Esophagus muscularis mucosa (tissue), 4 donors: ENCODE measurements at regions of chr20 and their contacts with region 1.

Region 1: GRCh38 chr20:21125849-21126580 is at the start of gene KIZ:
- DNase-seq: peak; percentile 97
- H3K4me3 ChIP-seq: peak within 1 kb of the TSS; percentile 82 to 97 (median 92)
- H3K27ac ChIP-seq: peak within 1 kb of the TSS; percentile 82 to 87 (median 86)
- H3K4me1 ChIP-seq: peaks cover 0 to 21% (median 17%) of the 10 kb centered on the region in 4 donors
- H3K27me3 ChIP-seq: no peaks in the 10 kb centered on the region
- CTCF ChIP-seq: peak; percentile 43 to 64 (median 51)
- EP300 ChIP-seq: no peak
- POLR2A ChIP-seq: peak; percentile 87
- total RNA-seq, gene KIZ: 17.2 to 32.0 (median 25.6) TPM

Region 2: GRCh38 chr20:21074605-21075336 is 51.2 kb before region 1 on chr20:
- intact Hi-C with region 1: no loop called
- DNase-seq: no peak
- H3K4me3 ChIP-seq: no peak overlapping the region
- H3K27ac ChIP-seq: no peak overlapping the region
- H3K4me1 ChIP-seq: no peaks in the 10 kb centered on the region
- H3K27me3 ChIP-seq: peaks cover 0 to 14% (median 0%) of the 10 kb centered on the region in 4 donors
- CTCF ChIP-seq: no peak
- EP300 ChIP-seq: no peak
- POLR2A ChIP-seq: no peak

Region 3: GRCh38 chr20:21099751-21100577 is 26.1 kb before region 1 on chr20:
- intact Hi-C with region 1: no loop called
- DNase-seq: peak; percentile 83
- H3K4me3 ChIP-seq: peak overlapping the region; percentile 44 to 61 (median 46)
- H3K27ac ChIP-seq: no peak overlapping the region
- H3K4me1 ChIP-seq: peaks cover 33 to 46% (median 43%) of the 10 kb centered on the region in 4 donors
- H3K27me3 ChIP-seq: peaks cover 0 to 90% (median 66%) of the 10 kb centered on the region in 4 donors
- CTCF ChIP-seq: no peak
- EP300 ChIP-seq: no peak
- POLR2A ChIP-seq: no peak

Region 4: DNA sequence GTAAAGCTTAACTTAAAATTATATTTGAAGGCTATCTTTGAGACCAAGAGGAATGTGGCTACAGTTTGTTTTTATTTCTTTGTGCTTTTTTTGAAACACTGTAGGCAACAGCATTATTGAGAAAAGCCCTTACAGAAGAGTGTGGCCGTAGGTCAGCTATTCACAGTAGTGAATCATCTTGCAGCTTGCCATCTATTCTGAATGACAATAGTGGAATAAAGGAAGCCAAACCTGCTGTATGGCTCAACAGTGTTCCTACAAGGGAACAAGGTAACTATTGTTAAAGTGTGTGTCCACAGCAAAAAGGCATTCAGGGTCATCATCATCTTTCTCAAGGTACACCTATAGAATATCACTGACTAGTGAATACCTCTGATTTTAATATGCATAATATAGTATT is 88.4 kb after region 1 on chr20:
- intact Hi-C with region 1: no loop called
- DNase-seq: no peak
- H3K4me3 ChIP-seq: no peak overlapping the region
- H3K27ac ChIP-seq: no peak overlapping the region
- H3K4me1 ChIP-seq: no peaks in the 10 kb centered on the region
- H3K27me3 ChIP-seq: no peaks in the 10 kb centered on the region
- CTCF ChIP-seq: no peak
- EP300 ChIP-seq: no peak
- POLR2A ChIP-seq: no peak

Region 5: GRCh38 chr20:21303061-21303871 is 177.3 kb after region 1 on chr20 and contains the start of gene XRN2:
- intact Hi-C with region 1: loop called (anchors 5 kb)
- DNase-seq: peak; percentile 98
- H3K4me3 ChIP-seq: peak within 1 kb of the TSS; percentile 89 to 100 (median 95)
- H3K27ac ChIP-seq: peak within 1 kb of the TSS; percentile 95 to 100 (median 97)
- H3K4me1 ChIP-seq: peaks cover 15 to 25% (median 23%) of the 10 kb centered on the region in 4 donors
- H3K27me3 ChIP-seq: peaks cover 0 to 7% (median 0%) of the 10 kb centered on the region in 4 donors
- CTCF ChIP-seq: peak in 1 of 3 experiments; percentile 13
- EP300 ChIP-seq: no peak
- POLR2A ChIP-seq: peak; percentile 58
- total RNA-seq, gene XRN2: 49.0 to 76.9 (median 56.7) TPM